H1 (cell line): ENCODE measurements at regions of chr17 and their contacts with region 1.

Region 1: GRCh38 chr17:34443619-34444469 is 80.8 kb upstream of the CCL1 start:
- DNase-seq: peak in 1 of 2 experiments; percentile 62
- H3K4me3 ChIP-seq: no peak overlapping the region
- H3K27ac ChIP-seq: no peak overlapping the region
- H3K4me1 ChIP-seq: peaks cover 0 to 4% (median under 1%) of the 10 kb centered on the region in 4 experiments; a peak in 1 of 7 replicates
- H3K27me3 ChIP-seq: no peaks in the 10 kb centered on the region
- CTCF ChIP-seq: peak; percentile 80 to 83 (median 81)
- EP300 ChIP-seq: no peak
- POLR2A ChIP-seq: no peak
- RAD21 ChIP-seq: peak; percentile 89 to 93

Region 2: DNA sequence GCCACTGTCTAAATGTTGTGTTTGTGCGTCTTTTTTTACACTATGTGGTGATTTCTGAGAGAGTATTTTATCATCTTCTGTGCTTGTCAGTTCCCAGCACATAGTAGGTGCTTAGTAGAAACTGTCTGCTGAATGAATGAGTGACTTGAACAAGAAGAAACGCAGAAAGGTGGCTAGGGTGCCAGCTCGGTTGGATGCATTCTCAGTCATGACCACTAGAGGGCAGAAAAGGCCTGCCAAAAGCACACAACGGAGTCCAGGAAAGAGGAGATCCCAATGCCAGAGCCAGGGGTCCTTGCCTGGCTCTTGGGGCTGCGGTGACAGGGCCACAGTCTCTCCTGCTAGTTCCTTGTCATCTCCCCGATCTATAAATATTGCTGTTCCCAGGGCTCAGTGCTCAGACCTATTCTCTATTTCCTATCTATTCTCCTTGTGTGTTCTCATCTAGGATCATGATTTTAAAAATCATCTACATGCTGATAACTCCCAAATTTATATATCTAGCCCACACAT is 23.5 kb before region 1 on chr17:
- CTCF ChIA-PET with region 1: interaction called, 49 read pairs
- POLR2A ChIA-PET with region 1: no interaction called
- DNase-seq: peak; percentile 59 to 88
- H3K4me3 ChIP-seq: no peak overlapping the region
- H3K27ac ChIP-seq: no peak overlapping the region
- H3K4me1 ChIP-seq: peaks cover 0 to 10% (median 4%) of the 10 kb centered on the region in 4 experiments; a peak in 4 of 7 replicates
- H3K27me3 ChIP-seq: no peaks in the 10 kb centered on the region; a peak in 1 of 7 replicates
- CTCF ChIP-seq: peak; percentile 65 to 93 (median 92)
- EP300 ChIP-seq: no peak
- POLR2A ChIP-seq: no peak
- RAD21 ChIP-seq: peak; percentile 97 to 98

Region 3: GRCh38 chr17:34474706-34475105 is 30.9 kb after region 1 on chr17:
- CTCF ChIA-PET with region 1: interaction called, 32 read pairs
- POLR2A ChIA-PET with region 1: no interaction called
- DNase-seq: no peak
- H3K4me3 ChIP-seq: no peak overlapping the region
- H3K27ac ChIP-seq: no peak overlapping the region
- H3K4me1 ChIP-seq: no peaks in the 10 kb centered on the region; a peak in 1 of 7 replicates
- H3K27me3 ChIP-seq: no peaks in the 10 kb centered on the region
- CTCF ChIP-seq: peak; percentile 41 to 49 (median 48)
- EP300 ChIP-seq: no peak
- POLR2A ChIP-seq: no peak
- RAD21 ChIP-seq: peak; percentile 25 to 48; a peak in 3 of 4 replicates

Region 4: DNA sequence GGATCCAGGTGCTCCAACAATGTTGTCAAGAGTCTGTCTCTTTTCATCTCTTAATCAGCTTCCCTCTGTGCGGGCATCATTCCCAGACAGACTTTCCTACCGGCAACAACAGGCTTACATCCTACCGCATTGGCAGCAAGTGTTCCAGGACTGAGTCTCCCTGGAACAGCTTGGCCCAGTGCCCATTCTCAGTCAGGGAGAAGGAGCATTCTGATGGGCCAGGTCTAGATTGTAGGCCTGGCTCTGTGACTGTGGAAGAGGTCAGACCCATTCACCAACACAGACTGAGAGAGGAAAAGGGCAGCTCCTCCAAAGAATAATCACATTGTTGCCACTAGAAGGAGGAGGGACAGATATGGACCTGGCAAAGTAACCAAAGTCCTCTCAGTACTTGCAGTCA is 67.4 kb after region 1 on chr17:
- CTCF ChIA-PET with region 1: interaction called, 95 read pairs
- POLR2A ChIA-PET with region 1: no interaction called
- DNase-seq: no peak
- H3K4me3 ChIP-seq: no peak overlapping the region
- H3K27ac ChIP-seq: no peak overlapping the region
- H3K4me1 ChIP-seq: no peaks in the 10 kb centered on the region
- H3K27me3 ChIP-seq: no peaks in the 10 kb centered on the region; a peak in 1 of 7 replicates
- CTCF ChIP-seq: no peak
- EP300 ChIP-seq: no peak
- POLR2A ChIP-seq: no peak
- RAD21 ChIP-seq: no peak

Region 5: GRCh38 chr17:34527908-34528470 is 84.1 kb after region 1 on chr17:
- CTCF ChIA-PET with region 1: interaction called, 95 read pairs
- POLR2A ChIA-PET with region 1: no interaction called
- DNase-seq: peak in 1 of 2 experiments; percentile 67
- H3K4me3 ChIP-seq: no peak overlapping the region
- H3K27ac ChIP-seq: no peak overlapping the region
- H3K4me1 ChIP-seq: peaks cover 0 to 3% (median 0%) of the 10 kb centered on the region in 4 experiments; a peak in 1 of 7 replicates
- H3K27me3 ChIP-seq: no peaks in the 10 kb centered on the region; a peak in 1 of 7 replicates
- CTCF ChIP-seq: peak; percentile 71 to 81 (median 74)
- EP300 ChIP-seq: no peak
- POLR2A ChIP-seq: no peak
- RAD21 ChIP-seq: peak; percentile 47 to 60; a peak in 3 of 4 replicates